Activated CD4-positive, alpha-beta T cell treated with anti-CD3 and anti-CD28 coated beads, Interleukin-2, amount 10 ng/mL, durations not matched to agents 7 days and 5 days (primary cell): ENCODE measurements at regions of chr22 and their contacts with region 1.

Region 1: GRCh38 chr22:23849009-23850006 is 8.4 kb upstream of the SLC2A11 start:
- DNase-seq: peak; percentile 85
- H3K4me3 Mint-ChIP-seq: no peak overlapping the region
- H3K27ac Mint-ChIP-seq: no peak overlapping the region
- H3K4me1 Mint-ChIP-seq: peaks cover 6% of the 10 kb centered on the region
- H3K27me3 Mint-ChIP-seq: peaks cover 16% of the 10 kb centered on the region

Region 2: GRCh38 chr22:23539135-23539838 is 310.0 kb before region 1 on chr22:
- CTCF ChIA-PET with region 1: no interaction called
- POLR2A ChIA-PET with region 1: no interaction called
- DNase-seq: peak; percentile 83
- H3K4me3 Mint-ChIP-seq: no peak overlapping the region
- H3K27ac Mint-ChIP-seq: no peak overlapping the region
- H3K4me1 Mint-ChIP-seq: peaks cover 6% of the 10 kb centered on the region
- H3K27me3 Mint-ChIP-seq: peaks cover 13% of the 10 kb centered on the region

Region 3: GRCh38 chr22:23774743-23775566 is 74.4 kb before region 1 on chr22:
- CTCF ChIA-PET with region 1: interaction called, 12 read pairs
- POLR2A ChIA-PET with region 1: no interaction called
- DNase-seq: no peak
- H3K4me3 Mint-ChIP-seq: no peak overlapping the region
- H3K27ac Mint-ChIP-seq: no peak overlapping the region
- H3K4me1 Mint-ChIP-seq: peaks cover 12% of the 10 kb centered on the region
- H3K27me3 Mint-ChIP-seq: peaks cover 17% of the 10 kb centered on the region

Region 4: GRCh38 chr22:23816156-23816976 is 32.9 kb before region 1 on chr22:
- CTCF ChIA-PET with region 1: no interaction called
- POLR2A ChIA-PET with region 1: no interaction called
- DNase-seq: no peak
- H3K4me3 Mint-ChIP-seq: no peak overlapping the region
- H3K27ac Mint-ChIP-seq: no peak overlapping the region
- H3K4me1 Mint-ChIP-seq: peaks cover 27% of the 10 kb centered on the region
- H3K27me3 Mint-ChIP-seq: no peaks in the 10 kb centered on the region

Region 5: GRCh38 chr22:23834798-23835483 is 14.4 kb before region 1 on chr22:
- CTCF ChIA-PET with region 1: interaction called, 10 read pairs
- POLR2A ChIA-PET with region 1: no interaction called
- DNase-seq: no peak
- H3K4me3 Mint-ChIP-seq: no peak overlapping the region
- H3K27ac Mint-ChIP-seq: no peak overlapping the region
- H3K4me1 Mint-ChIP-seq: peaks cover 25% of the 10 kb centered on the region
- H3K27me3 Mint-ChIP-seq: no peaks in the 10 kb centered on the region